Left ventricle myocardium inferior (tissue), 1 donor: ENCODE measurements at regions of chr5 and their contacts with region 1.

Region 1: GRCh38 chr5:172770675-172771438 is at the start of gene DUSP1:
- DNase-seq: peak; percentile 100
- H3K4me3 ChIP-seq: peak within 1 kb of the TSS; percentile 84
- H3K27ac ChIP-seq: peak within 1 kb of the TSS; percentile 98
- H3K4me1 ChIP-seq: peaks cover 67% of the 10 kb centered on the region
- H3K27me3 ChIP-seq: no peaks in the 10 kb centered on the region
- CTCF ChIP-seq: peak; percentile 63
- total RNA-seq, gene DUSP1: 85.0 TPM

Region 2: GRCh38 chr5:171122372-171122771 is 1648.5 kb before region 1 on chr5:
- intact Hi-C with region 1: no loop called
- DNase-seq: no peak
- H3K4me3 ChIP-seq: no peak overlapping the region
- H3K27ac ChIP-seq: no peak overlapping the region
- H3K4me1 ChIP-seq: no peaks in the 10 kb centered on the region
- H3K27me3 ChIP-seq: peaks cover 3% of the 10 kb centered on the region
- CTCF ChIP-seq: no peak

Region 3: GRCh38 chr5:172594867-172595466 is 175.9 kb before region 1 on chr5:
- intact Hi-C with region 1: no loop called
- DNase-seq: peak; percentile 2
- H3K4me3 ChIP-seq: no peak overlapping the region
- H3K27ac ChIP-seq: no peak overlapping the region
- H3K4me1 ChIP-seq: peaks cover 25% of the 10 kb centered on the region
- H3K27me3 ChIP-seq: no peaks in the 10 kb centered on the region
- CTCF ChIP-seq: no peak

Region 4: GRCh38 chr5:172714491-172715421 is 56.1 kb before region 1 on chr5:
- intact Hi-C with region 1: loop called (anchors 2 kb)
- DNase-seq: peak; percentile 82
- H3K4me3 ChIP-seq: no peak overlapping the region
- H3K27ac ChIP-seq: peak overlapping the region; percentile 82
- H3K4me1 ChIP-seq: peaks cover 52% of the 10 kb centered on the region
- H3K27me3 ChIP-seq: no peaks in the 10 kb centered on the region
- CTCF ChIP-seq: peak; percentile 92

Region 5: GRCh38 chr5:172868924-172869591 is 98.2 kb after region 1 on chr5:
- intact Hi-C with region 1: loop called (anchors 2 kb)
- DNase-seq: peak; percentile 81
- H3K4me3 ChIP-seq: peak overlapping the region; percentile 26
- H3K27ac ChIP-seq: peak overlapping the region; percentile 95
- H3K4me1 ChIP-seq: peaks cover 99% of the 10 kb centered on the region
- H3K27me3 ChIP-seq: no peaks in the 10 kb centered on the region
- CTCF ChIP-seq: peak; percentile 35

Region 6: DNA sequence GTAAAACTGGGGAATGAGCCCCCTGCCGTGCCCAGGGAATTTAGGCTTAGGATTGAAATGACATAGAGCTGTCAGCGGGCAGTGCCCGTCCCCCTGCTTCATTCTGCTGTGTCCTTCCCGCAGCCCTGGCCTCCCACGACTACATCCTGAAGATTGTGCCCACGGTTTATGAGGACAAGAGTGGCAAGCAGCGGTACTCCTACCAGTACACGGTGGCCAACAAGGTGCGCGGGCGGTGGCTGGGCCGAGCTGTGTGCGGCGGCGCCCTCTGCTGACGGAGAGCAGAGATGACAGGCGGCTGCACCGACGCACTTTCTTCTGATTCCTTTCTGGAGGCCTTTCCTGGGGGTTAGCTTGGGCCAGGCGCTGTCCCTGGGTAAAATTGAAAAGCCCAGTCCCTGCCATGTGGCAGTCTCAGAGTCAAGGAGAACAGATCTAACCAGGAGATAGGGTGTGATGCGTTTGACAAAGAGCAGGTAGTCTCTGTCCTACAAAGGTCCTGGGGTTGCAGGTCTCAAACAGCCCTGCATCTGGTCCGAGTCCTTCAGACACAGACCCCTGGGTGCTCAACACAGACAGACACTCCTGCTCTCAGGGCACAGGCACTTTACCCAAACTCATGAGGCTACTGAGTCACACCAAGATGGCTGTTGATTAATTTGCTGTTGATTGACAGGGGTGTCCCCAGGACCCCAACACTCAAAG is 161.6 kb after region 1 on chr5:
- intact Hi-C with region 1: loop called (anchors 10 kb)
- DNase-seq: peak; percentile 70
- H3K4me3 ChIP-seq: no peak overlapping the region
- H3K27ac ChIP-seq: peak overlapping the region; percentile 76
- H3K4me1 ChIP-seq: peaks cover 25% of the 10 kb centered on the region
- H3K27me3 ChIP-seq: no peaks in the 10 kb centered on the region
- CTCF ChIP-seq: peak; percentile 97